Activated CD4-positive, alpha-beta T cell treated with anti-CD3 and anti-CD28 coated beads, Interleukin-2, amount 10 ng/mL, durations not matched to agents 7 days and 5 days (primary cell): ENCODE measurements at regions of chr1 and their contacts with region 1.

Region 1: DNA sequence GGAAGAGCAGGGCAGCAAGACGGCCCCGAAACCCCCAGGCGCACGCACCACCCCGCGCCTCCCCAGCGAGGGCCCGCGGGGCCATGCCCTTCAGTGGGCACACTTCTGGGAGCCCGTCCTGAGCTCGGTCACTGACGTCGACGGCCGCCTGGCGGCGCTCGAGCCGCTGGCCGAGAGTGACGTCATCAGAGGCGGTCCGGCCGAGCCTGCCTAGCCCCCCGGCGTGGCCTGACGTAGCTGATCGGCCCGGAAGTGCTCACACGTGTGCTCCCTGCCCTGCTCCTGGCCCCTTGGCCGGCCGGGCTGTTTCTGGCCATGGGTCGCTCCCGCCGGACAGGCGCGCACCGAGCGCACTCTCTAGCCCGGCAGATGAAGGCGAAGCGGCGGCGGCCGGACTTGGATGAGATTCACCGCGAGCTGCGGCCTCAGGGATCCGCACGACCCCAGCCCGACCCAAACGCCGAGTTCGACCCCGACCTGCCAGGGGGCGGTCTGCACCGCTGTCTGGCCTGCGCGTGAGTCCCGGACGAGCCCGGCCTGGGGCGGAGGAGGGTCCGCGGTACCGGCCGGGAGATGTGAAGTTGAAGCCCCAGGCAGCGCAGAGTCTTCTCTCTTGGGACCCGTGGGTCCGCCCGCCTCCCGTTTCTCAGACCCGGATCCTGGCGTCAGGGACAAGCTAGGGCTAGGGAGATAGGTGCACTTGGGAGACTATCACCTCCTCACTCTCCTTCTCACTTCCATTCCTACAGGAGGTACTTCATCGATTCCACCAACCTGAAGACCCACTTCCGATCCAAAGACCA is at the start of gene ZNF593:
- DNase-seq: peak; percentile 84
- H3K4me3 Mint-ChIP-seq: peak within 1 kb of the TSS; percentile 82
- H3K27ac Mint-ChIP-seq: peak within 1 kb of the TSS; percentile 88
- H3K4me1 Mint-ChIP-seq: peaks cover 34% of the 10 kb centered on the region
- H3K27me3 Mint-ChIP-seq: peaks cover 10% of the 10 kb centered on the region
- total RNA-seq, gene ZNF593: 27.3 to 28.6 TPM

Region 2: DNA sequence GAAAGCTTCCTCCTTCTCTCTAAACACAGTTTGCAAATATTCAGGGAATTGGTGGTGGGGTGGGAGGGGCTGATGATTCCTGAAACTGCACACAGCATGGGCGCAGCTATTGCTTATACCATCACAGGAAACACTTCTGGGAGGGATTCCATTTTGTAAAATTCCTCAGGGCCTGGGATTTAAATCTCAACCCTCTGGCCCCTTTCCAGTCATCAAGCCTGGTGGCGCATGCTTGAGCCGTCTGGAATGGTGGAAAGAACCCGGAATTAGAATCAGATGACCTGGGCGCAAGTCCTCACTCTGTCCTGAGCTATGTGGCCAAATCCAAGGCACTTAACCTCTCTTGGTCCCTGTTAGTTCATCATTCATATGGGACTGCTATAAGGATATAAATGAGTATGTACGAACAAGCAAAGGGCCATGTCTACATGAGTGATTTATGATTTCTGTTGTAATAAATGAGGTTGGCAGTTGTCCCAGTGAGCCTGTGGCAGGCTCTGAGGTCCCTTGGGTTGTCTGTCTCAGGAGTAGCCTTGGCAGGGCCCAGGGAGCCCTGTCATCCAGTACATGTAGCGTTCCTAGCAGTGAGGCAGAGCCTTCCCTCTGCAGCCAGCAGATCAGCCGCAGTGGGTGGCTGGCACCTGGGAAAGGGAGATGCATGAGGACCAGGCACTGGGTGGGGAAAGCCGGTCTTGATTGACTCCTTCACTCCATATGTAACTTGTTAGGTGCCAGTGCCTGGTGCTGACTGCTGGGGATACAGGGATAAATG is 481.3 kb before region 1 on chr1:
- CTCF ChIA-PET with region 1: no interaction called
- POLR2A ChIA-PET with region 1: no interaction called
- DNase-seq: no peak
- H3K4me3 Mint-ChIP-seq: no peak overlapping the region
- H3K27ac Mint-ChIP-seq: no peak overlapping the region
- H3K4me1 Mint-ChIP-seq: peaks cover 10% of the 10 kb centered on the region
- H3K27me3 Mint-ChIP-seq: peaks cover 7% of the 10 kb centered on the region

Region 3: DNA sequence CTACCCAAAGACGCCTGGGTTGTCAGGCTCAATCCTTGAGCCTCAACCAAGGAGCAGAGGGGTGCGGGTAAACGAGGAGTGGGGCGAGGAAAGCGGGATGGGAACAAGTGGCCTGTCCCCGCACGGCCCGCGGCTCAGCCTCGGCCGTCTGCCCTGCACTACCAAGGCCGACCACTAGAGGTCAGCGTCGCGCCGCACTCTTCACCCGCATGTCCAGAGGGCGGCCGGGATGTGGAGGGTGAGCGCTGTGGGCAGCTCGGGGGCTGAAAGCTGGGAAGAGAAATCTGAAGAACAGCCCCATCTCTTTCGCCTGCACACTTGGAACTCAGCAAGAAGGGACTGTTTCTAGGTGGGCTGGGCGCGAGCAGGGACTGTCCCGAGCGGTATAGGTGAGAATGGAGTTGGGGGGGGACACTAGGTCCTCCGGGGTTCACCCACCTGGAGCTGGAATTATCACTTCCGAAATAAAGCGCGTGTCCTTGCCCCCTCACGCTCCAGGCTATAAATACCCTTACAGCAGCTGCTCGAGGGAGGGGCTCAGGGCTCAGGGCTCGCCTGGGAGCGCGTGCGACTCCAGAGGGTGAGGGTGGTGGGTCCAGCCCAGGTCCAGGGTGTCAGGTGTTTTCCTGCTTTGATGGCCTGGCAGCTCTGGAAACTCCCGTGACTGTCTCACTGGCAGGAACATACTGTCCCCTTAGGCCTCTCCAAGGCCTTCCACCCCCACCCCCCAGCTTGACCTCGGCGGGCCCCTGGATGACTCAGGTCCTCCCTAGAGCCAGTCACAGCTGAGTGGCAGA is 133.7 kb before region 1 on chr1:
- CTCF ChIA-PET with region 1: interaction called, 11 read pairs
- POLR2A ChIA-PET with region 1: no interaction called
- DNase-seq: peak; percentile 74
- H3K4me3 Mint-ChIP-seq: peak overlapping the region; percentile 85
- H3K27ac Mint-ChIP-seq: peak overlapping the region; percentile 64
- H3K4me1 Mint-ChIP-seq: peaks cover 10% of the 10 kb centered on the region
- H3K27me3 Mint-ChIP-seq: peaks cover 13% of the 10 kb centered on the region

Region 4: GRCh38 chr1:26145041-26145959 is 24.6 kb before region 1 on chr1:
- CTCF ChIA-PET with region 1: interaction called, 11 read pairs
- POLR2A ChIA-PET with region 1: no interaction called
- DNase-seq: peak; percentile 83
- H3K4me3 Mint-ChIP-seq: no peak overlapping the region
- H3K27ac Mint-ChIP-seq: no peak overlapping the region
- H3K4me1 Mint-ChIP-seq: peaks cover 2% of the 10 kb centered on the region
- H3K27me3 Mint-ChIP-seq: peaks cover 21% of the 10 kb centered on the region

Region 5: DNA sequence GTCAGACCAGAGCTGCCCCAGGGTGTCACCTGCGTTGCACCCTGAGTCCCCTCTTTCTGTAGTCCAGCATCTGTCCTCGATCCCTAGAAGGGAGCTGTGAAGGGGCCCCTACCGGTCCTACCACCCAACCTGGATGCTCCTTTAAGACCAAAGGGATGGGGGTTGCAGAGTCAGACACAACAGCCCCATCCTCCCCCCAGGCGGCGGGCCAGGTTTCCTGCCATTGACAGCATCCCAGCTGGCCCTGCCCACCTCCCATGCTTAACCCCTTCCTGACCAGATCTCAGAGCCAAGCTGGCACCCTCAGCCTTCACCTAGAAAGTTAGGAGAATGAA is 13.2 kb before region 1 on chr1:
- CTCF ChIA-PET with region 1: interaction called, 11 read pairs
- POLR2A ChIA-PET with region 1: no interaction called
- DNase-seq: no peak
- H3K4me3 Mint-ChIP-seq: no peak overlapping the region
- H3K27ac Mint-ChIP-seq: no peak overlapping the region
- H3K4me1 Mint-ChIP-seq: peaks cover 3% of the 10 kb centered on the region
- H3K27me3 Mint-ChIP-seq: peaks cover 52% of the 10 kb centered on the region

Region 6: DNA sequence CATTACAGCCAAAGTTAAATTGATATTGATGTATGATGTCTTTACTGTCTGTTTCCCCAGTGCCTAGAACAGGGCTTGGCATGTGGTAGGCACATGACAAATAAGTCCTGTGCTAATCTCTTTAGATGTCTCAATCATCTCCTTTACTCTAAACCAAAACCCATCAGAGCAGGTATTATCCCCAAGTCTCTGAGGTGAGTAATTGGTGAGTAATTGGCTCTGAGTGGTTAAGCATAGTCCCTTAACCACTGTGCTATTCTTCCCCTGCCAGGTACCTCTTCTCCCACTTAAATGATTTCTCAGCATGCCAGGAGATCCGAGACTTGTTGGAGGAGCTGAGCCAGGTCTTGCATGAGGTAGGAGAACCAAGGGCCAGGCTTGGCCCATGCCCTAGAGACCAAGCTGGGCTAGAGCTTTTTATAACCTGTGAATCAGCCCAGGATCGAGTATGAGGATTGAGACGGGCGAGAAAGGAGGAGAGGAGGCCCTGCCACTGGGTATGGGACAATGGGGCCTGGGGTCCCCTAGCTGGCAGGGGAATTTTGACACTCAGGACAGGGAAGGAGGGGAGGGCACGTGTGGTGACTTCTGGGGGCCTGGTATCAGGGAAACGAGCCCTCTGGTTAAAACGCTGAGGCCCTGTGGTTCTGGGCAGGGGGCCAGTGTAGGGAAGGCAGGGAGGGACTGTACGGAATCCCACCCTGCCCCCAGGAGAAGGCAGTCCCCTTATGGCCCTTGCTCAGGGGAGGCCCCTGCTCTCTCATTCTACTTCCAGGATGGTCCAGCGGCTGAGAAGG is 11.9 kb after region 1 on chr1:
- CTCF ChIA-PET with region 1: interaction called, 12 read pairs
- POLR2A ChIA-PET with region 1: no interaction called
- DNase-seq: no peak
- H3K4me3 Mint-ChIP-seq: no peak overlapping the region
- H3K27ac Mint-ChIP-seq: no peak overlapping the region
- H3K4me1 Mint-ChIP-seq: peaks cover 4% of the 10 kb centered on the region
- H3K27me3 Mint-ChIP-seq: no peaks in the 10 kb centered on the region

Region 7: GRCh38 chr1:26187882-26188281 is 18.0 kb after region 1 on chr1:
- CTCF ChIA-PET with region 1: interaction called, 12 read pairs
- POLR2A ChIA-PET with region 1: interaction called, 5 read pairs
- DNase-seq: no peak
- H3K4me3 Mint-ChIP-seq: no peak overlapping the region
- H3K27ac Mint-ChIP-seq: no peak overlapping the region
- H3K4me1 Mint-ChIP-seq: peaks cover 16% of the 10 kb centered on the region
- H3K27me3 Mint-ChIP-seq: no peaks in the 10 kb centered on the region

Region 8: DNA sequence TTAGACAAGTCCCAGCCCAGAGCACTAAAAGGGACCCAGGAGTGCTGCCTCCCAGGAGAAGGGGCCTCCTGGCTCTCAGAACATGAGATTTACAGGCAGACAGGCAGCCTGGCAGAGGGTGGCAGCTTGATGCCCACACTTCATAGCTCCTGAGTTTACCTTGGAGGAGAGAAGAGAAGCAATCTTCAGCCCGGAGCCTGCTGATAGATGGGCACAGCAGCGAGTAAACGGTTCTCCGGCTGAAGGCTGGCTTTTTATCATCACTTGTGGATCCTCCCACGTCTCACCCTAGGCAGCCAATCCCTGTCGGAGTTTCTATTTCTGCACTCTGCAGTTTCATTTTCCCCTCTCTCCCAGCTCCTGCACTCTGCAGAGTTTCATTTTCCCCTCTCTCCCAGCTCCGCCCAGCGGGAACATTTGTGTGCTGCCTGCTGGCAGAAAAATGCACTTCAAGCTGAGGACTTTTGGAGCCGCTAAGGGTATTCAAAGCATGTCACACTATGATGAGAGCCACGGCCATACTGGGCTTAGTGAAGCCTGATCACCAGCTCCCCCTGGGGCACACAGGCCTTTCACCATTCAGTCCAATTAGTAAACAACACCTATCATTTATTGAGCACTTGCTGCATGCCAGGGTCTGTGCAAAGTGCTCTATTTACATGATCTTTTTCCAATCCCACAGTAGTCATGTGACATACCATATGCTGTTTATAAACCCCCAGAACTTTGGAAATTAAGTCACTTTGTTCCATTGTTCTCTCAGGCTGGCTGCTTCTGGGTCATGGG is 1502.3 kb after region 1 on chr1 and contains the start of gene IFI6:
- CTCF ChIA-PET with region 1: no interaction called
- POLR2A ChIA-PET with region 1: no interaction called
- DNase-seq: peak; percentile 92
- H3K4me3 Mint-ChIP-seq: peak within 1 kb of the TSS; percentile 98
- H3K27ac Mint-ChIP-seq: peak within 1 kb of the TSS; percentile 97
- H3K4me1 Mint-ChIP-seq: peaks cover 39% of the 10 kb centered on the region
- H3K27me3 Mint-ChIP-seq: no peaks in the 10 kb centered on the region
- total RNA-seq, gene IFI6: 231 to 321 TPM